OCI-LY7 (cell line): ENCODE measurements at regions of chr5 and their contacts with region 1.

Region 1: GRCh38 chr5:135887351-135887864 is 8.2 kb downstream of the IL9 start:
- DNase-seq: peak; percentile 78
- H3K4me3 ChIP-seq: no peak overlapping the region
- H3K27ac ChIP-seq: no peak overlapping the region
- H3K4me1 ChIP-seq: no peaks in the 10 kb centered on the region
- CTCF ChIP-seq: peak; percentile 94

Region 2: DNA sequence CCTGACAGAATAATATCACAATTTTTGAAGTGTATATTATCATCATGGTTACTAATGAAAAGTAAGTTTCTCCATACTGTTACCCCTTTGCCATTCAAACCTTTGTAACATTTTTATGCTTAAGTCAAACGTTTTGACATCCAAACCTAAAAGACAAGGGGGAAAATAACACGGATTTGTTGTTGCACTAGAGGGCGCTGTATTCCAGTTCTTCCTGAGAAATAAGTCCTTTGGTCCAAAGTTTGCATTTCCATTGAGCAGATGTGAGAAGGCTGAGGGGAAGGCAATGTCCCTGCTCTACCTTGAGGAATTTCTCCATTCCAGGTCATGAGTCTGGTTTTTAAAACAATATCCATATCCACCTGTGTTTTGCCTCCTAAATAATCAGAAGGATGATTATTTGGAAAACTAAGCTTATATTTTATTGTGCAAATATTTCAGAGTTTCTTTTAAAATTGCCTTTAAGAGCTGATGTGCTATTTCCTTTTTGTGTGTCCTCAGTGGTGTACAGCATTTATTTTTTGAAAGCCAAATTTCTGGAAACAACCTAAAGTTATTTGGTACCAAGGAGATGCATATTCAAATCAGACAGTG is 57.7 kb after region 1 on chr5:
- CTCF ChIA-PET with region 1: no interaction called
- POLR2A ChIA-PET with region 1: no interaction called
- intact Hi-C with region 1: loop called (anchors 2 kb)
- DNase-seq: peak; percentile 84
- H3K4me3 ChIP-seq: no peak overlapping the region
- H3K27ac ChIP-seq: no peak overlapping the region
- H3K4me1 ChIP-seq: no peaks in the 10 kb centered on the region
- CTCF ChIP-seq: peak; percentile 95

Region 3: DNA sequence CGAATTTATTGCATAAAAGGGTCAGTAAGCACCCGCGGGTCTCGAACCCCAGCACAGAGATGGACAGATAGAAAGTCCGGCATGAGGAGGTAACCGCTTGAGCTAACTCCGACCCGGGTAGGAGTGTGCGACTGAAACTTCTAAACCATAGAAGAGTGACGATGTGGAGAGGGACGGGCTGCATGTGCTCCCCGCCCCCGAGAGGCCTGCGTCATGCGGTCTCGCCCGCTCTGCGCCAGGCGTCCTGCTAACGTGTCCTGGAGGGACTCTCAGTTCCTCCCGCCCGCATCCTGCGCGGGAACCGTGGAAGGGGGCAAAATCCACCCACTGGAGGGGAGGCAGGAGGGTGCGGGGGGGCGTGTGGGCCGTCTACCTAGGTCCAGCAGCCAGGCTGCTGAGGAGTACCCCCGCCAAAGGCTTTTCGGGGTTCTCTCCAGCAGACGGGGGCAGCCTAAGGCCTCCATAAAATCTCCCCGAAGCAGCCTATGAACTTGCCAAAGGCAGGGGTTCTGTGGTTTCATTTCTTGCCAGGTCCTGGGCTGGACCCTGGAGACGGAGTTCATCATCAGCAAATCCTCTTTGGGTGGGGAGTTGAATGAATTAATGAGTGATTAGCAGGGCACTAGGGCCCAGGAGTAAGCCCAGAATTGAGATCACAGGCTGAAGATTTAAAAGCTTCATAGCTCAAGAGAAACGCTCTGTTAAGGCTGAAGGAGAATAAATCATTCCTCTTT is 193.2 kb after region 1 on chr5:
- CTCF ChIA-PET with region 1: no interaction called
- POLR2A ChIA-PET with region 1: no interaction called
- intact Hi-C with region 1: loop called (anchors 1 kb)
- DNase-seq: no peak
- H3K4me3 ChIP-seq: no peak overlapping the region
- H3K27ac ChIP-seq: no peak overlapping the region
- H3K4me1 ChIP-seq: peaks cover 3% of the 10 kb centered on the region
- CTCF ChIP-seq: no peak

Region 4: DNA sequence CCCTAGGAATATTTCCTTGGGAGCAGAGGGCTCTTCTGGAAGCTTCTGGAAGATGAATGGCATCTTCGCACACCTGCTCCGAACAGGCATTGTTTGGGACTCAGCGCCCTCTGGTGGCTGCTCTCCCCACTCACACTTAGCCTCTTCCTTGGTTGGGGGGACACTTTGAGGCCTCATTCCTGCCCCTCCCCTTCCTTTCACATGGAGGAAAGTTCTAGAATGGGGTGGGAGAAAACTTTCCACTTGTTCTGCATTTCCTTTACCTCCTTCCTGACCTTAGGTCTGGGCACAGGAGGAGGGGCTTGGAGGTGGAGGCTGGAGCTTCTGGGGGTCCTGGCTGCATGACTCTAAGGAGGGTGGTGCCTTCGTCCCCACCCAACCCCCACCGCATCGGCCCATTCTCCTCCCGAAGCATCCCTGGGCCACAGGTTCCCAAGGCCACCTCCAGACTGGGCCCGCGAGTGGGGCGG is 324.9 kb after region 1 on chr5:
- CTCF ChIA-PET with region 1: no interaction called
- POLR2A ChIA-PET with region 1: no interaction called
- intact Hi-C with region 1: loop called (anchors 1 kb)
- DNase-seq: peak; percentile 57
- H3K4me3 ChIP-seq: no peak overlapping the region
- H3K27ac ChIP-seq: no peak overlapping the region
- H3K4me1 ChIP-seq: no peaks in the 10 kb centered on the region
- CTCF ChIP-seq: peak; percentile 98

Region 5: GRCh38 chr5:136769900-136770684 is 882.7 kb after region 1 on chr5:
- CTCF ChIA-PET with region 1: no interaction called
- POLR2A ChIA-PET with region 1: no interaction called
- intact Hi-C with region 1: loop called (anchors 10 kb)
- DNase-seq: peak; percentile 62
- H3K4me3 ChIP-seq: no peak overlapping the region
- H3K27ac ChIP-seq: no peak overlapping the region
- H3K4me1 ChIP-seq: no peaks in the 10 kb centered on the region
- CTCF ChIP-seq: peak; percentile 84